Activated T-helper 1 cell treated with anti-CD3 and anti-CD28 coated beads, Interleukin-12 subunit alpha, Interleukin-12 subunit beta, Interleukin-2, Interleukin-4 antibody, amounts not matched to agents 30 ng/mL and 10 ng/mL and 1 ng/mL, durations not matched to agents 14 hours and 24 hours and 36 hours (primary cell): ENCODE measurements at regions of chr12 and their contacts with region 1.

Region 1: DNA sequence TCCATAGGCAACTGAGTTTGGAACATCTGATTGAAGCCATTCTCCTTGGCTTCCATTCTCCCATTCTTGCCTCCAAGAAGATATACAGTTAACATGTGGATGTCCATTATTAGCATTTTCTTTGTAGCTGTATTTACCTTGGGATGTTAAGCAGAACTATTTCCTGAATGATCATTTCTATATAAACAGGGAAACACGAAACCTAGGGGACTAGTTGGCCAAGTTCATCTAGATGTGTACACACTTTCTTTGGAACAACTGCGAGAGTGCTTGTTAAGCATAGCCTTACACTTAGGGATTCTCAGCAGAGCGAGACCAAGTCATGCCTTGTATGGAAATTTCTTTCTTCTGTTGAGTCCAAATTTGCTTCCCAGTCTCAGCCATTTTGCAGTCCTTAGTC is 42.1 kb downstream of the DRAM1 start:
- DNase-seq: no peak
- H3K4me3 Mint-ChIP-seq: no peak overlapping the region
- H3K27ac Mint-ChIP-seq: no peak overlapping the region
- H3K4me1 Mint-ChIP-seq: peaks cover 10% of the 10 kb centered on the region
- H3K27me3 Mint-ChIP-seq: peaks cover 2% of the 10 kb centered on the region

Region 2: DNA sequence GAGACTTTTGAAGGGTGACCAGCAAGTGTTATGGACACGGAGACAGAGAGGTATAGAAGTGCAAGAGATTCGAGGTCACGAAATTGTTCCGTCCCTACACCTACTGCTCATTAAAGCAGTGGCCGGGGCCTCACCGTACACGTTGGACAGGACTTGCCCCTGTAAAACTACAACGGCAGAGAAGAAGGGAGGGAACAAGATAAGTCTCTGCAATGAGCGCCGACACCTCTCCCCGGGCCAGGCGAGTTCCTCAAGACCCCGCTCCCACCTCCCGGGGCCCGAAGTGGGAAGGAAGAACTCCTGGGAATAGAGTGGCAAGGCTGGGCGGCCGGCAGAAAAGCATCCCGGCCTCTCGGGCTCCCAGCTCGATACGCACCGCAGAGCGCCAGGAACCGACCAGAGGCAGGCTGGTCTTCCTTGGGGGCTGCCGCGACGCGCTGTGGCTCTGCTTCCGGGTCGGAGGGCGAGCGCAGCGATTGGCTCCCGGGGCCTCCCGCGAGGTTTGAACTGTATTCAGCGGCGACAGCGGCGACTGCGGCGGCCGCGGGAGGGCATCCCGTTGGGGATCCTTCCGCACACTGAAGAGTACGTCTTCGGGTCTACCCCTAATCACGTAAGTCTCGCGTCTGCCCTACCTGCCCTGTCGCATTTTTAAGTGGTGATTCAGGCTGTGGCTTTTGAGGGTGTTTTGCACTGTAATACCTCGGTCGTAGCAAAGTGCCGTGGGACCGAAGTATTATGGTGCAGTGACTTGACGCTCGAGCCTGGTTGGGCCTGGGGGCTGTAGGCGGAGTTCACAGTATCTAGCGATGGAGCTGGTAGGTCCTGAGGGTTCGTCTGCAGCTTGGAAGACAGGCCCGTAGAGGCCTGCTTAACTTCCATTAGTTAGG is 200.5 kb after region 1 on chr12 and contains the starts of genes NUP37 and PARPBP:
- intact Hi-C with region 1: loop called (anchors 1 kb)
- DNase-seq: peak; percentile 92
- H3K4me3 Mint-ChIP-seq: peak within 1 kb of the TSS; percentile 92
- H3K27ac Mint-ChIP-seq: peak within 1 kb of the TSS; percentile 95
- H3K4me1 Mint-ChIP-seq: peaks cover 48% of the 10 kb centered on the region
- H3K27me3 Mint-ChIP-seq: no peaks in the 10 kb centered on the region
- total RNA-seq, gene NUP37: 81.5 and 84.1 TPM in 2 replicates
- total RNA-seq, gene PARPBP: 23.5 and 25.1 TPM in 2 replicates

Region 3: GRCh38 chr12:102702447-102703114 is 783.1 kb after region 1 on chr12:
- intact Hi-C with region 1: loop called (anchors 1 kb)
- DNase-seq: peak; percentile 9
- H3K4me3 Mint-ChIP-seq: no peak overlapping the region
- H3K27ac Mint-ChIP-seq: no peak overlapping the region
- H3K4me1 Mint-ChIP-seq: no peaks in the 10 kb centered on the region
- H3K27me3 Mint-ChIP-seq: peaks cover 10% of the 10 kb centered on the region

Region 4: DNA sequence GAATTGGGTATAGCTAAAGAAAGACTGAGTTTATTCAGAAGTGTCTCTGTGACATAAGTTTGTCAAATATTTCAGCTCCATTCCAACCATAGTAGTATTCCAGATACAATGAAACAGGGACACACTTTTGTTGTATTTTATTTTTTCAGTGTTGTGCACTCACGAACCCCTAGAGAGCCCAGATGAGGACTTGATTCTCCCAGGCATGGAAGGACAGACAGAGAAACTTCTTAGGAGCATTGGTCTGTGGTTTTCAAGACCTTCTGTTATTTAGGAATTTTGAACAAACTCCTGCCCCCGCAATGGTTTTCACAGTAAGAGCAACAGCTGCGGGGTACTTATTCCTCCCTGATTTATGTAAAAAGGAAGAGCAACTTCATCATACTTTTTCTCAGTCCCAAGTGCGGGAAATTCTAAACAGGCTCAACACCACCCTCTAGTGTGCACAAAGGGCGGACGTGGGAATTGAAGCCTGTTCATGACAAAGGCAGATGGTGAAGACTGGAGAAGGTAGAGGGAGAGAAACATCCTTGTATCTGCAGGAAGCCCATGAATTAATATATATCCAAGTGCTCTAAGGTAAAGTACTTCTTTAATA is 850.0 kb after region 1 on chr12:
- intact Hi-C with region 1: loop called (anchors 1 kb)
- DNase-seq: peak; percentile 11
- H3K4me3 Mint-ChIP-seq: no peak overlapping the region
- H3K27ac Mint-ChIP-seq: no peak overlapping the region
- H3K4me1 Mint-ChIP-seq: no peaks in the 10 kb centered on the region
- H3K27me3 Mint-ChIP-seq: peaks cover 12% of the 10 kb centered on the region

Region 5: DNA sequence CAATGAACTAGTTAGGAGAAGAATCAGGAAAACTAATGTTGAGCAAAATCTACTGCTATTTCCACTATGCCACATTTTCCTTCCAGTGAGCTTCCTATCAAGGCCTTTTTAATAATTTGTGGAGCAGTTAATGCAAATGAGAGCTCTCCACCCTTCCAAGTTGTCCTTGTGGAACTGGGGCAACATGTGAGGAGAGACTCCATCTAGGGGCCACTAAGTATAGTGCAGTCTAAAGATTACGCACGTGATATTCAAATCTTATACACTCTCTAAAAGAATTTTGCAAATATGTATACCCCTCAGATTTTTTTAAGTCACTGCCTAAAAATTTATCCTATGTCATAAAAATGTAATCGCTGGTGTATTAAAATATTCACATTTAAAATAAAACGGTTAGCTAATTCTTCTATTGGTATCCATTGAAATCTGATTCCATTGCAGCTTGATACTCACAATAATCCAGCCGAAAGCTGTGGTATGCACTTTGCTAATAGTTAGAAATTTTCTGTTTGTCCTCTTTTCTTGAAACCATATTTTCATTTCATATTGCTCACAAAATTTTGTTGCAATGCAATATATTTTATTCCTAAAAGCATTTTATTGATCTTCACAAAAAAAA is 897.5 kb after region 1 on chr12:
- intact Hi-C with region 1: loop called (anchors 1 kb)
- DNase-seq: no peak
- H3K4me3 Mint-ChIP-seq: no peak overlapping the region
- H3K27ac Mint-ChIP-seq: no peak overlapping the region
- H3K4me1 Mint-ChIP-seq: no peaks in the 10 kb centered on the region
- H3K27me3 Mint-ChIP-seq: peaks cover 3% of the 10 kb centered on the region